Right cardiac atrium (tissue), 5 donors: ENCODE measurements at regions of chr1 and their contacts with region 1.

Region 1: DNA sequence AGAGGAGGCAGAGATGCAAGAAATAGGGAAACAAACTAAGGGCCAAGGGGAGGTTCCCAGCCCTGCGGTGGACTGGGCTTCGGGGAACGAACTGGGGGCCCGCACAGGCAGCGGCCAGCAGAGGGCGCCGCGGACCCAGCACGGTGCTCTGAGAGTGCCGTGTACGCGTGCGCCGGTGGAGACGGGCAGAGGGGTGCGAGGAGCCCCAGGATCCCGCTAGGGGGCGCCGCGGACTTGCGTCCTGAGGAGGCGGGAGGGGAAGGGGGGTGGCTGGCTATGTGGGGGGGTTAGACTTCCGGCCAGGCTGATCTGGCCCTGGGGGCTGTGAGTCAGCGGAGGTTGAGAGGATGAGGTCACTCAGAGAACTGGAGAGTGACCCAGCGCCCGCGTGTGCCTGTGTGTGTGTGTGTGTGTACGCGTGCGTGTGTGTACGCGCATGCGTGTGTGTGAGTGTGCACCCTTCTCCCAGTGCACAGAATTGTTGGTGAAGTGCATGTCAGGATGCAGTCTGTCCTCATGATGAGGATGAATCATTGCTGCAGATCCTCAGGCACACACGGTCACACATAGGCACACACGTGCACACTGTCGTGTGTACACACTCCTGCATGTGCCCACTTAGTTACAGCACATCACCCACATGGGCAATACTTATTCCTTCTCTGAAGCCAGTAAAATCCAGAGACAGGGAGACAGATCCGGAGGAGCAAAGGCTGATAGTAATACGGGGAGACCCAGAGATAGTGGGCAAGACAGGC is 17.0 kb downstream of the NES start:
- DNase-seq: peak; percentile 98 to 99 (median 98)
- ATAC-seq: peak; percentile 86 to 88
- H3K4me3 ChIP-seq: no peak overlapping the region
- H3K27ac ChIP-seq: peak overlapping the region; percentile 90
- H3K4me1 ChIP-seq: peaks cover 43% of the 10 kb centered on the region
- H3K27me3 ChIP-seq: no peaks in the 10 kb centered on the region

Region 2: DNA sequence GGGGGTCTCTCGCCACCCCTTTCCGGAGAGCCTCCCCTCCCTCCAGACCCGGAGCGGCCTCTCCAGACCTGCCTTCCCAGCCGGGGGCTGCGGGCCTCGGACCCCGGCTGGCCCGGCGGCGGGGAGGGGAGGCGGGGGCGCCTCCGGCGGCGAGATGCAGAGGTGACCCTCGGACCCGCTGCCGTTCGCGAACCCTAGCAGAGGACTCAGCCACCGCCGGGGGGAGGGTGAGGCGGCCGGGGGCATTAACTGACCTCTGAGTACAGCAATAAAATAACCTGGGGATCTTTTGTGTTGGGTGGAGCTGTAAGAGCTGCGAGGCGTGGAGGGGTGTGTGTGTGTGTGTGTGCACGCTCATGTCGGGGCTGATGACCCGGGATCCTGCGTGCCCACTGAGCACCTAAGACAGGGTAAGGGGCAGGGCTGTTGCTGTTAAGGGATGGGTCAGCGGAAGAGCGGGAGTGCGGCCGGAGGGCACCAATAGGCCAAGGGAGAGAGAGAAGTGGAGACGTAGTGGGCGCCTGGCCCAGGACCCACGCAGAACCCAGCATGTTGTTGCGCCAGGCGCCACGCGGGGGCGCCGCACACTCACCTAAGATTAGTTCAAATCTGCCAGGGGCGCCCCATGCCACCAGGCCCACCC is 34.6 kb before region 1 on chr1:
- intact Hi-C with region 1: loop called in 3 of 4 experiments (anchors 2 to 5 kb)
- DNase-seq: peak; percentile 53 to 84 (median 81)
- ATAC-seq: peak; percentile 48 to 59
- H3K4me3 ChIP-seq: peak overlapping the region; percentile 30
- H3K27ac ChIP-seq: no peak overlapping the region
- H3K4me1 ChIP-seq: no peaks in the 10 kb centered on the region
- H3K27me3 ChIP-seq: no peaks in the 10 kb centered on the region

Region 3: GRCh38 chr1:156677616-156678596 is 17.7 kb after region 1 on chr1:
- intact Hi-C with region 1: loop called in 3 of 4 experiments (anchors 1 to 2 kb)
- DNase-seq: peak; percentile 82 to 89 (median 87)
- ATAC-seq: peak; percentile 67 to 75
- H3K4me3 ChIP-seq: peak overlapping the region; percentile 66
- H3K27ac ChIP-seq: peak overlapping the region; percentile 81
- H3K4me1 ChIP-seq: peaks cover 7% of the 10 kb centered on the region
- H3K27me3 ChIP-seq: no peaks in the 10 kb centered on the region